Ovary (tissue), 10 donors: ENCODE measurements at regions of chr12 and their contacts with region 1.

Region 1: DNA sequence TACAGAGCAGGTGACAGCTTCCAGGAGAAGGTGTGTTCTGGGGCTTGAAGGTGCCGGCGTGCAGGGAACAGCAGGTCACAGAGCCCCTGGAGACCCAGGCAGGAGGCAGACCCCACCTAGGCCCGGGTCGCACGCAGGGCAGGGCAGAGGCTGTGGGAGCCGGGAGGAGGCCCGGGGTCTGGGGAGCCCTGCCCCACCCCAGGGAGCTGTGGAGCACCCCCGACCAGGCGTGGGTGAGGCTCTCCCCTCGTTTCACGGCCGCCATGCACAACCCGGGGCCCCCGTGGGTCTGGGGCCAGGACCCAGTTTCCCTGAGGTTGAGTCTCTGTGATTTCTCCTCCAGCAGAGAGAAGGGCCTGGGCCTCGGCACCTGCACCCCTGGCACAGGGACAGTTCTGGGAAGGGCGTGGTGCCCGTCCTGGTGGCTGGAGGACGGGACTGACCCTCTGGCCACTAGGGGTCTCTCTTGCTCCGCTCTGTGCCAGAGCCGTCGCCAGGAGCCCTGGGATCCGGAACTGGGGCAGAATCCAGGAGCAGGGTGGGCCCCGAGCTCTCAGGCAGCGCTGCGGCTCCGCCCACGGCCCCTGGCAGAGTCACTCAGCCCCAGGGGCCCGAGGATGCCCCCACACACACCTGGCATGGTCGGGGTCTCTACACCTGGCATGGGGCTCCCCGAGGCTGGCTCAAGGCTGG is 75.2 kb upstream of the FBRSL1 start:
- DNase-seq: peak; percentile 55 to 83 (median 78)
- H3K4me3 ChIP-seq: no peak overlapping the region
- H3K27ac ChIP-seq: no peak overlapping the region
- H3K4me1 ChIP-seq: peaks cover 1% of the 10 kb centered on the region
- H3K27me3 ChIP-seq: no peaks in the 10 kb centered on the region
- CTCF ChIP-seq: peak; percentile 31 to 66 (median 56)
- EP300 ChIP-seq: no peak
- POLR2A ChIP-seq: no peak

Region 2: GRCh38 chr12:132523576-132524331 is 109.0 kb after region 1 on chr12:
- intact Hi-C with region 1: loop called in 2 of 4 experiments (anchors 5 to 10 kb)
- DNase-seq: peak; percentile 38 to 72 (median 65)
- H3K4me3 ChIP-seq: no peak overlapping the region
- H3K27ac ChIP-seq: no peak overlapping the region
- H3K4me1 ChIP-seq: no peaks in the 10 kb centered on the region
- H3K27me3 ChIP-seq: no peaks in the 10 kb centered on the region
- CTCF ChIP-seq: peak; percentile 25 to 52 (median 49)
- EP300 ChIP-seq: no peak
- POLR2A ChIP-seq: no peak

Region 3: DNA sequence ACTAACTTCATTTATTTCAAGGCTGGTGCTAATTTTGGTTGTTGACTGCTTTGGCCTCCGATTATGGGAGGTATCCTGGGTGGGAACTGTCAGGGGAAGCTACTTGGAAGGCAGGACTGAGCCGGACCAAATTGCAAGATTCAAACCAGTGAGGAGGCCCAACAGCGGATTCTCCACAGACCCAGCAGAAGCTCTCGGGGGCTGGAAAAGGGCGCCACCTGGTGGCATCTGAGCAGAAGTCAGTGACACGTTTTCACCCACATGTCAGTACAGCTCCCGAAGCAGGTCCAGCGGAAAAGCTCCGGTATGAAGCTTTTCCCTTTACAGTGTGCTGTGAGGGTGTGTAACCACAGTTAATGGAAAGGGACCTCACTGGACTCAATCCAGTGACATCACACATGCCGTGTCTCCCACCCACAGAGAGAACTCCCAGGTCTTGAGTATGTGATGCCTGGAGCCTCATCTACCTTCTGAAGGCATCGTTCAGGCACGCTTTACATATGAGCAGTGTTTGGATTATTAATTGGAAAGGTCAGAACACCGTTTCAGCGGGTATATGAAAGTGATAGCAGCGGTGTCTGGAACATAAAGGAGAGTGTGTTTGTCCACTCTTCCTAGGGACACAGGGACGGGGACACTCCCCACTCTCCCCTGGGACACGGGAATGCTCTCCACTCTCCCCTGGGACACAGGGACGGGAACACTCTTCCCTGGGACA is 200.2 kb after region 1 on chr12:
- intact Hi-C with region 1: loop called in 1 of 4 experiments (anchors 5 kb)
- DNase-seq: peak; percentile 57 to 83 (median 79)
- H3K4me3 ChIP-seq: no peak overlapping the region
- H3K27ac ChIP-seq: no peak overlapping the region
- H3K4me1 ChIP-seq: peaks cover 3% of the 10 kb centered on the region
- H3K27me3 ChIP-seq: peaks cover 9% of the 10 kb centered on the region
- CTCF ChIP-seq: peak; percentile 51 to 57 (median 53)
- EP300 ChIP-seq: no peak
- POLR2A ChIP-seq: no peak

Region 4: DNA sequence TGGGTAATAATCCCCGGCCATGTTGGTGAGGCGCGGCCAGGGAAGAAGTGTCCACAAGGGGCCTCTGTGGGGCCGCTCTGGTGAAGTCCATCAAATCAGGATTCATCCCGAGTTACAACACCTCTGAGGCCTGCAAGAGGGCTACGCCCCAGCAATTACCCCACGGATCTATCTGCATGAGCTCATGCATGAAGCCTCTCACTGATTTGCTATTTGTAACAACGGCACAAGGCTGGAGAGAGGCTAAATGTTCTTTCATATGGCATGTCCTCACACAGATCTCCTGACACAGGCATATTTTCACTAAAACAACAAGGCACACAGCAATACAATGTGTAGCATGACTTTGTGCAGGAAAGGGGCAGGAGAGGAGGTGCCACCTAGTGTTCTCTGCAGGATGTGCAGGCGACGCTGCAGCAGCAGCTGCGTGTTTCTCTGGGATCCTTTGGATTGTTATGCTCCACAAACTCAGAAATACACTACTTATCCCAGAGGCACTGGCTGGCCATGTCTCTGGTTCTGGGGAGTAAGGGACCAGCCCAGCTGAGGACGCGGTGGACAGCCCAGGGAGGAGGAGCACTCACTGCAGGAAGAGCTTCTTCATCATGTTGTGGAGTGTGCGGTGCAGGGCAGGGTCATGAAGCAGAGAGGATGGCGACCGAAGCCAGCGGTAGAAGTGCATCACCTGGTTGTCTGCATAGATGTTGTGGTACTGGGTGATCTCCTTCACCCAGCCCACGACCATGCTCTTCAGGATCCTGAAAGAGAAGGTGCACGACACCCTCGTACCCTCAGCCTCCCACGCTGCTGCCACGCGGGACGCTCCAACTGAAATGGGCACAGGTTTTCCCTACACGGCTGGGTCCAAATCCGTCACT is 224.0 kb after region 1 on chr12:
- intact Hi-C with region 1: loop called in 1 of 4 experiments (anchors 10 kb)
- DNase-seq: peak in 2 of 5 donors; percentile 48 to 63
- H3K4me3 ChIP-seq: no peak overlapping the region
- H3K27ac ChIP-seq: no peak overlapping the region
- H3K4me1 ChIP-seq: no peaks in the 10 kb centered on the region
- H3K27me3 ChIP-seq: no peaks in the 10 kb centered on the region
- CTCF ChIP-seq: peak in 1 of 3 donors; percentile 51
- EP300 ChIP-seq: no peak
- POLR2A ChIP-seq: no peak